ENCODE measurements at regions of chr10 and their contacts with region 1.

Region 1: DNA sequence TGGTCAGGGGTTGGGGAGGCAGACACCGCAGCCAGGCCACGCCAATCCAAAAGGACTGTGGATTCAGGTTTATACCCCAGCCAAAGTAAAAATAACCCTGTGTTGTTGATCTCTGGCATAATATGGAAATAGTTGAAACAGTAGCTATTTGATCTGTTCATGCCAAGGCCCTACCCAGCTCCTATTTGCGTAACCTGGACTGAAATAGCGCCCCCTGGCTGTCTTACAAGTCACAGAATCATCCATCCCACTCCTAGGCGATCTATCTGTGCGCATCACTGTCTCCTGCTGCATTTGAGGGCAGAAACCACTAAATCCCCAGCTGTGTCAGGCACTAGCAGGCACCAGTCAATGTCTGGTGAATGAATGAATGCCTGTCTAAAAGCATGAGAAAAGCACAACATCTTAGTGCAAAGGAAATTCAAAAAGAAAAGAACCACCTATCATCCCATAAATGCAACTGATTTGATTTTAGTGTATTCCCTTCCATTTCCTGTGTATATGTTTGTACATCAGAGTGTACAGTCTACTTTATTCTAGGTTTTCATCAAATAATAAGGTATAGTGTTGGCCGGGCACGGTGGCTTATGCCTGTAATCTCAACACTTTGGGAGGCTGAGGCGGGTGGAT is 160.0 kb downstream of the SLIT1 start:
- DNase-seq: peak; percentile 69
- ATAC-seq: peak; percentile 77
- H3K4me3 Mint-ChIP-seq: no peak overlapping the region
- H3K27ac Mint-ChIP-seq: no peak overlapping the region
- H3K4me1 Mint-ChIP-seq: peaks cover 16% of the 10 kb centered on the region
- H3K27me3 Mint-ChIP-seq: peaks cover 20% of the 10 kb centered on the region

Region 2: GRCh38 chr10:96803318-96803664 is 222.4 kb before region 1 on chr10:
- CTCF ChIA-PET with region 1: no interaction called
- DNase-seq: no peak
- ATAC-seq: no peak
- H3K4me3 Mint-ChIP-seq: no peak overlapping the region
- H3K27ac Mint-ChIP-seq: no peak overlapping the region
- H3K4me1 Mint-ChIP-seq: peaks cover 5% of the 10 kb centered on the region
- H3K27me3 Mint-ChIP-seq: peaks cover 19% of the 10 kb centered on the region

Region 3: GRCh38 chr10:96910488-96911395 is 115.0 kb before region 1 on chr10:
- CTCF ChIA-PET with region 1: interaction called, 33 read pairs
- DNase-seq: no peak
- ATAC-seq: peak; percentile 42
- H3K4me3 Mint-ChIP-seq: no peak overlapping the region
- H3K27ac Mint-ChIP-seq: no peak overlapping the region
- H3K4me1 Mint-ChIP-seq: peaks cover 6% of the 10 kb centered on the region
- H3K27me3 Mint-ChIP-seq: no peaks in the 10 kb centered on the region

Region 4: GRCh38 chr10:96973809-96974747 is 51.6 kb before region 1 on chr10:
- CTCF ChIA-PET with region 1: interaction called, 10 read pairs
- DNase-seq: no peak
- ATAC-seq: no peak
- H3K4me3 Mint-ChIP-seq: no peak overlapping the region
- H3K27ac Mint-ChIP-seq: no peak overlapping the region
- H3K4me1 Mint-ChIP-seq: peaks cover 16% of the 10 kb centered on the region
- H3K27me3 Mint-ChIP-seq: no peaks in the 10 kb centered on the region